ENCODE measurements at regions of chr10 and their contacts with region 1.

Region 1: DNA sequence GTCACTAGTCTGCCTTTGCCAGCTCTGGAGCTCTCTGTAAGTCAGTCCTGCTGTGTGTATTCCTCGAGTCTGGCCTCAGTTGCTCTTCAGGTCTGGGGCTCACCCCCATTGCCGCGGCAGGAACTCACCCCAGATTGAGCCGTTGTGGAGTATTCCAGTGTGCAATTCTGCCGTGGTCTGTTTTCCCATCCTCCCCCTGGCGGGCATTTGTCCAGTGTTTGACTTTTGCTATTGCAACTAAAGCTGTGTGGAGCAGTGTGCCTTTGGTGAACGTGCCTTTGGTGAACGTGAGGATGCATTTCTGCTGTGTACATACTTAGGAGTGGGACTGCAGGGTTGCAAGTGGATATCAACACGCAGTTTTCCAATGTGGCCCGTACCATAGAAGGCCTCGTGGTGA is 134.5 kb downstream of the FAM53B start:
- DNase-seq: peak; percentile 42
- ATAC-seq: no peak
- H3K4me3 ChIP-seq: no peak overlapping the region
- H3K27ac ChIP-seq: no peak overlapping the region
- H3K4me1 ChIP-seq: peaks cover 37% of the 10 kb centered on the region
- H3K27me3 ChIP-seq: no peaks in the 10 kb centered on the region
- CTCF ChIP-seq: peak; percentile 33
- EP300 ChIP-seq: no peak
- POLR2A ChIP-seq: no peak
- RAD21 ChIP-seq: 0 out of 2 replicates have a peak, but pooled peaks have one; percentile 24

Region 2: GRCh38 chr10:124340033-124340760 is 269.5 kb before region 1 on chr10:
- CTCF ChIA-PET with region 1: no interaction called
- POLR2A ChIA-PET with region 1: no interaction called
- in situ Hi-C with region 1: no loop called
- intact Hi-C with region 1: no loop called
- DNase-seq: no peak
- ATAC-seq: no peak
- H3K4me3 ChIP-seq: no peak overlapping the region
- H3K27ac ChIP-seq: no peak overlapping the region
- H3K4me1 ChIP-seq: no peaks in the 10 kb centered on the region
- H3K27me3 ChIP-seq: peaks cover 3 to 9% of the 10 kb centered on the region in 2 experiments; a peak in 2 of 5 replicates
- CTCF ChIP-seq: no peak
- EP300 ChIP-seq: no peak
- POLR2A ChIP-seq: no peak
- RAD21 ChIP-seq: no peak

Region 3: GRCh38 chr10:124588736-124589490 is 20.8 kb before region 1 on chr10:
- CTCF ChIA-PET with region 1: no interaction called
- POLR2A ChIA-PET with region 1: interaction called, 12 read pairs
- in situ Hi-C with region 1: no loop called
- intact Hi-C with region 1: loop called (anchors 2 kb)
- DNase-seq: peak; percentile 15
- ATAC-seq: peak; percentile 37
- H3K4me3 ChIP-seq: peak overlapping the region; percentile 51 to 68 (median 53)
- H3K27ac ChIP-seq: peak overlapping the region; percentile 52
- H3K4me1 ChIP-seq: peaks cover 53% of the 10 kb centered on the region
- H3K27me3 ChIP-seq: no peaks in the 10 kb centered on the region
- CTCF ChIP-seq: no peak
- EP300 ChIP-seq: no peak
- POLR2A ChIP-seq: no peak
- RAD21 ChIP-seq: no peak

Region 4: DNA sequence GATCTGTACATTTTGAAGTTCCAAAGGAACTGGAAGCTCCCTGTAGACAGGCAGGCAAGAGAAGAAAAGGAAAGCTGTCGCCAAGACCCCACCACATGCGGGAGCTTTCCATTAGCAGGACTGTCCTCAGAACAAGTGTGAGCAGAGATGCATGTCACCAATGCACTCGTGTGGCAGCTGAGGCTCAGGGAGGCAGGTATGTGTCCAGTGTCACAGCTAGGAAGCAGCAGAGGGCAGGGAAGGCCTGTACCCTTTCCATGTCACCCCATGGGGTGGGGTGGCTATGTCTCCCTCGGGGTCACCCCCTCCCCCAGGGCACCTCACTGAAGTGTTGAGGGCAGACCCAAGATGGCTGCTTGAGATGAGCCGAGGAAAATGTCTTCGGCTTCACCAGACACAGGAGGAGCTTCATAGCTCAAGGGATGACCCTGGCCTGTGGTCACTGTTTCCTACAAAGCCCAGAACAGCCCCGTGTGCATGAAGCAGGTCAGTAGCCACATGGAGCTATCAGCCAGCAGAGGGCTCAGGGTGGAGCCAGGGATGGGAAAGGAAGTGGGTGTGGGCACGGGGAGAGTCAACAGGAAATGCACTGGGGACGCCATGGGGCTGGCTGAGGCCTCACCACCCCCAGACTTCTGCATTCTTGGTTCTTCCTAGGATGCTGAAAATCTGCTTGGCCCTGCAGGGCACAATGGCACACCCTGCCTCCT is 37.9 kb after region 1 on chr10:
- CTCF ChIA-PET with region 1: no interaction called
- POLR2A ChIA-PET with region 1: no interaction called
- in situ Hi-C with region 1: no loop called
- intact Hi-C with region 1: loop called (anchors 2 kb)
- DNase-seq: peak; percentile 24
- ATAC-seq: peak; percentile 56
- H3K4me3 ChIP-seq: no peak overlapping the region
- H3K27ac ChIP-seq: no peak overlapping the region
- H3K4me1 ChIP-seq: peaks cover 48% of the 10 kb centered on the region
- H3K27me3 ChIP-seq: no peaks in the 10 kb centered on the region
- CTCF ChIP-seq: peak; percentile 29; the same call in 1 of the 2 replicates
- EP300 ChIP-seq: no peak
- POLR2A ChIP-seq: no peak
- RAD21 ChIP-seq: no peak

Measured in HepG2 (cell line).